ENCODE measurements at regions of chr11 and their contacts with region 1.

Region 1: GRCh38 chr11:64652586-64653387 is 61.8 kb downstream of the SLC22A12 start:
- DNase-seq: peak; percentile 51 to 95
- H3K4me3 ChIP-seq: no peak overlapping the region
- CTCF ChIP-seq: peak in 1 of 3 donors; percentile 78
- POLR2A ChIP-seq: no peak

Region 2: GRCh38 chr11:64372802-64373597 is 279.8 kb before region 1 on chr11:
- intact Hi-C with region 1: loop called (anchors 10 kb)
- DNase-seq: no peak
- H3K4me3 ChIP-seq: no peak overlapping the region
- CTCF ChIP-seq: no peak
- POLR2A ChIP-seq: no peak

Region 3: GRCh38 chr11:64538501-64539294 is 114.1 kb before region 1 on chr11:
- intact Hi-C with region 1: no loop called
- DNase-seq: no peak
- H3K4me3 ChIP-seq: no peak overlapping the region
- CTCF ChIP-seq: no peak
- POLR2A ChIP-seq: no peak

Region 4: GRCh38 chr11:64553551-64554201 is 99.1 kb before region 1 on chr11:
- intact Hi-C with region 1: loop called (anchors 5 kb)
- DNase-seq: no peak
- H3K4me3 ChIP-seq: no peak overlapping the region
- CTCF ChIP-seq: peak in 1 of 3 donors; percentile 87
- POLR2A ChIP-seq: no peak

Measured in lower leg skin (tissue), 4 donors.